ENCODE measurements at regions of chr5 and their contacts with region 1.

Region 1: GRCh38 chr5:34576891-34577666 is 79.0 kb upstream of the RAI14 start:
- DNase-seq: peak; percentile 62
- ATAC-seq: peak; percentile 80
- H3K4me3 ChIP-seq: no peak overlapping the region
- H3K27ac ChIP-seq: peak overlapping the region; percentile 70
- H3K4me1 ChIP-seq: peaks cover 12% of the 10 kb centered on the region
- H3K27me3 ChIP-seq: no peaks in the 10 kb centered on the region
- CTCF ChIP-seq: no peak

Region 2: GRCh38 chr5:34538026-34538672 is 38.9 kb before region 1 on chr5:
- CTCF ChIA-PET with region 1: no interaction called
- POLR2A ChIA-PET with region 1: no interaction called
- intact Hi-C with region 1: loop called (anchors 2 kb)
- DNase-seq: peak; percentile 43
- ATAC-seq: no peak
- H3K4me3 ChIP-seq: no peak overlapping the region
- H3K27ac ChIP-seq: no peak overlapping the region; the same call in 1 of the 2 replicates
- H3K4me1 ChIP-seq: peaks cover 40% of the 10 kb centered on the region
- H3K27me3 ChIP-seq: no peaks in the 10 kb centered on the region
- CTCF ChIP-seq: peak; percentile 60

Region 3: DNA sequence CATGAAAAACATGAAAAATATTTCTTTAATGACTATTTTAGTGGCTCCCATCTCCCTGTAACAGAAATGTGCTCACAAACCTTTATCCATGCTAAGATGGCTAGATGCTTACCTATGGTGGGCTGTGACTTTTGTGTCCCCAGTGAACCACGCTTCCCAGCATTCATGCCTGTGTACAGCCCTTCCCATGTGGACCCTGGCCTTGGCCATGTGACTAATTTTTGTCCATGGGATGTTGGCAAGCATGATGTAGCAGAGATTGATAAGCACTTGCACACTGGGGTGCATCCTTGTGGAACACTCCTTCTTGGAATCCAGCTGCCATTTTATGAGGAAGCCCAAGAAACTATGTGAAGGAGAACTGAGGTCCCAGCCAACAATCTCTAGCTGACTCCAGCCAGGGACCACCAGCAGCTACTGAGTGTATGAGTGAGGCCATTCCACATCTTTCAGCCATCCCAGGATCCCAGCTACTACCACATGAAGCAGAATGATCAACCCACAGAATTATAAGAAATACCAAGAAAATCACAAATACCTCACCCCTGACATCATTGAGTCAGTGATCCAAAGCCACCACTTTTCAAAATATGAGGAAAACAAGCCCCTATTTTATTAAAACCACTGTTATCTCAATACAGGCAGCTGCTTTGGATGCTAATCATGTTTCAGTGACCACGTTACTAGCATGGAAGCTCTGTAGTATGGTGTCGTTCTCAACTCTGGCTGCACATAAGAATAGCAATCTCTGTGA is 63.0 kb after region 1 on chr5:
- CTCF ChIA-PET with region 1: no interaction called
- POLR2A ChIA-PET with region 1: no interaction called
- intact Hi-C with region 1: no loop called
- DNase-seq: no peak
- ATAC-seq: no peak
- H3K4me3 ChIP-seq: no peak overlapping the region
- H3K27ac ChIP-seq: no peak overlapping the region
- H3K4me1 ChIP-seq: no peaks in the 10 kb centered on the region
- H3K27me3 ChIP-seq: no peaks in the 10 kb centered on the region
- CTCF ChIP-seq: no peak

Region 4: DNA sequence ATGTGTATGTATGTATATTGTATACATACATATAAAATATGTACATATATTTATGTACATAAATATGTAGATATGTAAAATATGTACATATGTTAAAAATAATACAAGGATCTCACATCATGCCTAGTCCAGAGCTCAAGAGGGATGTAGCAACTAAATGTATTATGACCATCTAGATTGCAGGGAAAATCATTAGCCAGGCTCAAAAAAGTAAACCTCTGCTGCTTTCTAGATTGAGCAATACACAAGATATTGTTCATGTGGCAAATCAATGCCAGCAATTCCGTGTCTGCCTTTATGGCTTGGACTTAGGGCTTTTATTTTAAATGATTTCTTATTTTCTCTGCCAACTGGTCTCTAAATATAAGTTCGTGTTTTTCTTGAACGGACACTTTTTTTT is 144.2 kb after region 1 on chr5:
- CTCF ChIA-PET with region 1: no interaction called
- POLR2A ChIA-PET with region 1: no interaction called
- intact Hi-C with region 1: no loop called
- DNase-seq: no peak
- ATAC-seq: no peak
- H3K4me3 ChIP-seq: no peak overlapping the region
- H3K27ac ChIP-seq: no peak overlapping the region
- H3K4me1 ChIP-seq: peaks cover 33% of the 10 kb centered on the region
- H3K27me3 ChIP-seq: no peaks in the 10 kb centered on the region
- CTCF ChIP-seq: no peak

Region 5: DNA sequence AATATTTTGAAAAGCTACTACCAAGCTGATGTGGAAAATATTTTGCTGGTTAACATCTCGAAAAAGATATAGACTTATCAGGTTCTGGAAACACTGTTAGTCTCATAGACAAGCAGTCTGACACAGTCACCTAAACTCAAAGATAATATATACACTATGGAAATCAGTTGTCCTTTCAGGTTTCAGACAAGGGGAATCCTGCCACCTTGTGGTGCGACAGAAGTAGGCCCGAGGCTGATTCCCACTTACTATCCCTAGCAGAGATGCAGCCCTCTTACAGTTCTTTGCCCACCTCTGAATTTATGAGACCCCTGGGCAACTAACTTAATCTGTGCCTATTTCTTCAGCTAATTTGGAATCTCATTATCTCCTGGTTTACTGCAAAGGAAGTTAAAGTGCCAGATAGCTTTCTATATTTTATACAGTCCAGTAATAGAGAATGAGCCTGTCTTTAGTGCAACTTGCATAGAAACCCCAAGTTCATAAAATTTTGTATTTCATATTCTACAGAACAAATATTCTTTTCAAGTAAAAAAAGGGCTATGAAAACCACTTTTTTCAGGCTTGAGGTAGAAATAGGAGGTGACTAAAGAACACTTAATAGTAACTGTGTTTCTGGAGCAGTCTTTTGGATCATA is 321.3 kb after region 1 on chr5:
- CTCF ChIA-PET with region 1: no interaction called
- POLR2A ChIA-PET with region 1: no interaction called
- intact Hi-C with region 1: no loop called
- DNase-seq: peak; percentile 80
- ATAC-seq: peak; percentile 96
- H3K4me3 ChIP-seq: no peak overlapping the region
- H3K27ac ChIP-seq: no peak overlapping the region
- H3K4me1 ChIP-seq: peaks cover 14% of the 10 kb centered on the region
- H3K27me3 ChIP-seq: no peaks in the 10 kb centered on the region
- CTCF ChIP-seq: peak; percentile 93